Activated B cell treated with CpG ODN at 0.5 μM for 24 hours (primary cell): ENCODE measurements at regions of chr17 and their contacts with region 1.

Region 1: GRCh38 chr17:73255671-73256181 is 6.0 kb downstream of the CPSF4L start:
- DNase-seq: peak; percentile 51
- ATAC-seq: peak; percentile 71
- H3K4me3 Mint-ChIP-seq: no peak overlapping the region
- H3K27ac Mint-ChIP-seq: no peak overlapping the region
- H3K4me1 Mint-ChIP-seq: peaks cover 2% of the 10 kb centered on the region
- H3K27me3 Mint-ChIP-seq: no peaks in the 10 kb centered on the region
- CTCF ChIP-seq: peak; percentile 95

Region 2: GRCh38 chr17:72556944-72557826 is 698.5 kb before region 1 on chr17:
- CTCF ChIA-PET with region 1: no interaction called
- POLR2A ChIA-PET with region 1: no interaction called
- intact Hi-C with region 1: loop called (anchors 5 kb)
- DNase-seq: peak; percentile 23
- ATAC-seq: peak; percentile 40
- H3K4me3 Mint-ChIP-seq: no peak overlapping the region
- H3K27ac Mint-ChIP-seq: no peak overlapping the region
- H3K4me1 Mint-ChIP-seq: no peaks in the 10 kb centered on the region
- H3K27me3 Mint-ChIP-seq: no peaks in the 10 kb centered on the region
- CTCF ChIP-seq: peak; percentile 34

Region 3: DNA sequence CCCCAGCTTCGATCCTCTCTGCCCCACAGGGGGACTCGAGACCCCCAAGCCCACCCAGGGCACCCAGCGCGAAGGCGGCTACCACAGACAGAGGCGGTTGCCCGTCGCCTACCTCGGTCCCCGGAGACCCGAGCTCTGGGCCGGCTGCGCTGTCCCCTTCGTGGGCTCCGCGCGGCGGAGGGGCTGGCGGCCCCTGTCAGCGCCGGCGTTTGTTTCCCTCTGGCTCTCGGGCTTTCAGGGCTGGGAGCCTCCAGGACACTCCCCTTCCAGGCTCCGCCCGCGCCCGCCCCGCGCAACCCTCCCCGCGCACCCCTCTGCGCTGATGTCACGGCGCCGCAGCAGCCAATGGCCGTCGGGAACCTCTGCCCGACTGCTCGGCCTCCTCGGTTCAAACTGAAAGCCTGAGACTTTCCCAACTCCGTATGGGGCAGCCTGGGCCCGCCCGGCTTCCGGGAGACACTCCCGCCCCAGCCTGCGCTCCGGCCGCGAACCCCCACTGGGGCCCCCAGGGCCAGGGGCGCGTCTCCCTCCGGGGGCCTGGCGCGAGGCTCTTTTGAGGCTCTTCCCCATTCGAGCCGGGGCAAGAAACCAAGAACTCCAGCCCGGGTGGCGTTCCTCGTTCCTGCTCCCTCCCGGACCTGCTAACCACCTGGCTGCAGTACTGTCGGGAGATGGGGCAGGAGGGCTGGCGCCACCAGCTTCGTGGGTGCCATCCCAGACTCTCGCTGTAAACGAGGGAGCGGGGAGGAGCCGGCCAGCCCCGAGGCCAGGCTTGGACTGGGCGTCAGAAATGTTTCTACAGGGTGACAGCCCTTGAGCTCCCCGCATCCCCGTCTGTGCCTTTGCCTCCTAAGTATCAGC is 56.3 kb after region 1 on chr17 and contains the start of gene CDC42EP4:
- CTCF ChIA-PET with region 1: interaction called, 6 read pairs
- POLR2A ChIA-PET with region 1: no interaction called
- intact Hi-C with region 1: loop called (anchors 5 kb)
- DNase-seq: peak; percentile 76
- ATAC-seq: peak; percentile 91
- H3K4me3 Mint-ChIP-seq: peak within 1 kb of the TSS; percentile 84
- H3K27ac Mint-ChIP-seq: no peak within 1 kb of the TSS
- H3K4me1 Mint-ChIP-seq: peaks cover 19% of the 10 kb centered on the region
- H3K27me3 Mint-ChIP-seq: no peaks in the 10 kb centered on the region
- CTCF ChIP-seq: no peak
- total RNA-seq, gene CDC42EP4: 0.61 and 0.95 TPM in 2 replicates

Region 4: GRCh38 chr17:73371285-73371684 is 115.6 kb after region 1 on chr17:
- CTCF ChIA-PET with region 1: interaction called, 117 read pairs
- POLR2A ChIA-PET with region 1: no interaction called
- intact Hi-C with region 1: loop called (anchors 1 kb)
- DNase-seq: no peak
- ATAC-seq: no peak
- H3K4me3 Mint-ChIP-seq: no peak overlapping the region
- H3K27ac Mint-ChIP-seq: no peak overlapping the region
- H3K4me1 Mint-ChIP-seq: peaks cover 2% of the 10 kb centered on the region
- H3K27me3 Mint-ChIP-seq: no peaks in the 10 kb centered on the region
- CTCF ChIP-seq: no peak

Region 5: DNA sequence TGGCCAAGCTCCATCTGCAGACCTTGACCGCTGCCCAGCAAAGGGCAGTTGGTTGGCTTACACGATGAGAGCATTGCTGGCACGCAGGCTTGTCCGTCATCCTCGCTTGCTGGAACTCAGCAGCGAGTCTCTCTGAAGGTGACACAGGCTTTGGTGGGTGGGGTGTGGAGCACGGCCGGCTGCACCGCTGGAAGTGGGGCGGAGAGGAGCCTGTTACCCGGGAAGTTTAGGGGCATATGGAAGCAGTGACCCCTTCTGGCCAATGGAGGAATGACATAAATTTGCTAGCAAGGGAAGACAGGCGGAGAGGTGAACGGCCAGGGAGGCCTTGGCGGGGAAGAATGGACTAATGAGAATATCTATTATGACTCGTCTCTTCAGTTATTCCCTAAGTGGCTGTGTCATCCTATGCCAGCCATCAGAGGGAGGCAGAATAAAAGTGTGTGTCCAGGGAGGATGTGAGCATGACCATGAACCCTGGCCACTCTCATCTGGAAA is 454.4 kb after region 1 on chr17:
- CTCF ChIA-PET with region 1: no interaction called
- POLR2A ChIA-PET with region 1: no interaction called
- intact Hi-C with region 1: loop called (anchors 2 kb)
- DNase-seq: no peak
- ATAC-seq: peak; percentile 47
- H3K4me3 Mint-ChIP-seq: peak overlapping the region; percentile 1
- H3K27ac Mint-ChIP-seq: no peak overlapping the region
- H3K4me1 Mint-ChIP-seq: peaks cover 27% of the 10 kb centered on the region
- H3K27me3 Mint-ChIP-seq: peaks cover 10% of the 10 kb centered on the region
- CTCF ChIP-seq: peak; percentile 27